GM18951 (cell line): ENCODE measurements at regions of chr22 and their contacts with region 1.

Region 1: GRCh38 chr22:42515896-42516295 is 3.7 kb downstream of the RRP7A start:
- POLR2A ChIP-seq: no peak

Region 2: DNA sequence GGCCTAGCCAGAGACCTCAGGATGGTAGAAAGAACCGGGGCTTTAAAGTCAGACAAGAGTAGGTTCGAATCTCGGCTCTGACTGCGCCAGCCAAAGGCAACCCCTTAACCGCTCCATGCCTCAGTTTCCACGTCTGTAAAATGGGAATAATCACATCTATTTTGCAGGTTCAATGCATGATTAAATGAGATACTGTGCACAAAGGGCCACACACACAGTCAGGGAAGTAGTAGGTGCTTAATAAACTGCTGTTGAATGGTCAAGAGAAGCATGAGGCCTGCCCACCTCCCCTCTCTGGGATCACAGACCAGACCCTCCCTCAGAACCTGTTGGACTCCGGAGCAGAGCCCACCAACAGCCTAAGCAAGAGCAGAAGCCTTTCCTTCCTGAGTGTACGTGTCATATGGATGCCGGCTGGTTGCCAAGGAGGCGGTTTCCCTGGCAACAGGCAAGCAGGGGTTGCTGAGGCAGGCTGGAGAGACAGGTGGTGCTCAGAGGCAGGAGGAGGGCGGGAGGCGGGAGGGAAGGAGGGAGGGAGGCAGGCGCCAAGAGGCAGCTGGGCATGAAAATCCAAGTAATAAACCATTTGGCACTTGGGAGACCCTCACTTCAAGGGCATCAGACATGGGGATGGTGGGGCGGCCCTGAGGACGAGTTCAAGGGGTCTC is 127.6 kb before region 1 on chr22:
- in situ Hi-C with region 1: no loop called
- POLR2A ChIP-seq: no peak

Region 3: DNA sequence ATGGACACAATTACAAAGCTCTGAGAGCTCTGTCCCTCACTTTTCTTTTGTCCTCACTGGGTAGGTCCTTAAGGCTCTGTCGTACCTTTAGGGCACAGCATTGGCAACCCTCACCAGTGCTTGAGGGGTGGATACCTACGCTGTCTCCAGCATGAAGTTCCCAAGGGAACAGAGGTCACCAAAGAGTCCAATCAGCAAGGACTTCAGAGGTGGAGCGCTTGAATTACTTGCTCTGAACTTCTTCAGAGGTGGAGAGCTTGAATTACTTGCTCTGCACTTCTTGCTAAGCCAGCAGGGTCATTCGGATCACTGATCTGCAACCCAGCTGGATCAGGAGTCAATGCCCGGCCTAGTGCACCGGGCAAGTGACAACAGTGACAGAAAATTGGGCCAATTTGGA is 31.4 kb before region 1 on chr22:
- in situ Hi-C with region 1: no loop called
- POLR2A ChIP-seq: no peak

Region 4: GRCh38 chr22:42581762-42582716 is 66.1 kb after region 1 on chr22:
- in situ Hi-C with region 1: loop called (anchors 5 kb)
- POLR2A ChIP-seq: peak; percentile 74